Activated CD8-positive, alpha-beta T cell treated with anti-CD3 and anti-CD28 coated beads, Interleukin-2, amount 10 ng/mL, durations not matched to agents 7 days and 5 days (primary cell): ENCODE measurements at regions of chr19 and their contacts with region 1.

Region 1: GRCh38 chr19:17847538-17848366 is at the start of gene JAK3:
- DNase-seq: peak; percentile 90
- ATAC-seq: peak; percentile 80
- H3K4me3 Mint-ChIP-seq: peak within 1 kb of the TSS; percentile 91
- H3K27ac Mint-ChIP-seq: peak within 1 kb of the TSS; percentile 96
- H3K4me1 Mint-ChIP-seq: peaks cover 75% of the 10 kb centered on the region
- H3K27me3 Mint-ChIP-seq: no peaks in the 10 kb centered on the region
- total RNA-seq, gene JAK3: 125 to 127 TPM

Region 2: GRCh38 chr19:17511724-17512573 is 335.8 kb before region 1 on chr19:
- CTCF ChIA-PET with region 1: no interaction called
- POLR2A ChIA-PET with region 1: no interaction called
- DNase-seq: peak; percentile 94
- ATAC-seq: peak; percentile 74
- H3K4me3 Mint-ChIP-seq: peak overlapping the region; percentile 94
- H3K27ac Mint-ChIP-seq: peak overlapping the region; percentile 97
- H3K4me1 Mint-ChIP-seq: peaks cover 44% of the 10 kb centered on the region
- H3K27me3 Mint-ChIP-seq: no peaks in the 10 kb centered on the region

Region 3: DNA sequence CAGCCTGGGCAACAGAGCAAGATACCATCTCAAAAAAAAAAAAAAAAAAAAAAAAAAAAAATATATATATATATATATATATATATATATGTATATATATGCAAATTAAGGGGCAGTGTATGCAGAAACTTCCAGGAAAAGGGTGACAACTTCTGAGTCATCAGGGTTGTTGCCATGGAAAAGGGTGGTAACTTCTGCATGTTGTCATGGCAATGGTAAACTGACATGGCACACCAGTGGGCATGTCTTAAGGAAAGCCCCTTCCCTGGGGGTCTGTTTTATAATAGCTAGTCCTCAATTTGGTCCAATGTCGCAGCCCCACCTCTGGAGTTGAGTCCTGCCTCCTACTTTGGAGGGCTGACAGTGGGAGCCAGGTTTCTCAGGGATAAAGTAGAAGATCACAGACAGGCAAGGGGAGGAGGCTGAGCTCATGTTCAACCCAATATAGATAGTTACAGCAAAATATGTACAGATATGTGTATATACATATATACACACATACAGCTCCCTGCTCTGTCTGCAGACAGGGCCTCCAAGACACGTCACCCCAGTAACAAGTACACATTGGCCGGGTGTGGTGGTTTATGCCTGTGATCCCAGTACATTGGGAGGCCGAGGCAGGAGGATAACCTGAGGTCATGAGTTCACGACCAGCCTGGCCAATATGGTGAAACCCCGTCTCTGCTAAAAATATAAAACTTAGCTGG is 103.7 kb before region 1 on chr19:
- CTCF ChIA-PET with region 1: no interaction called
- POLR2A ChIA-PET with region 1: no interaction called
- DNase-seq: peak; percentile 26
- ATAC-seq: no peak
- H3K4me3 Mint-ChIP-seq: no peak overlapping the region
- H3K27ac Mint-ChIP-seq: no peak overlapping the region
- H3K4me1 Mint-ChIP-seq: peaks cover 27% of the 10 kb centered on the region
- H3K27me3 Mint-ChIP-seq: no peaks in the 10 kb centered on the region

Region 4: GRCh38 chr19:17834350-17835181 is 13.2 kb before region 1 on chr19:
- CTCF ChIA-PET with region 1: interaction called, 3 read pairs
- POLR2A ChIA-PET with region 1: interaction called, 12 read pairs
- DNase-seq: no peak
- ATAC-seq: no peak
- H3K4me3 Mint-ChIP-seq: no peak overlapping the region
- H3K27ac Mint-ChIP-seq: no peak overlapping the region
- H3K4me1 Mint-ChIP-seq: peaks cover 12% of the 10 kb centered on the region
- H3K27me3 Mint-ChIP-seq: no peaks in the 10 kb centered on the region

Region 5: DNA sequence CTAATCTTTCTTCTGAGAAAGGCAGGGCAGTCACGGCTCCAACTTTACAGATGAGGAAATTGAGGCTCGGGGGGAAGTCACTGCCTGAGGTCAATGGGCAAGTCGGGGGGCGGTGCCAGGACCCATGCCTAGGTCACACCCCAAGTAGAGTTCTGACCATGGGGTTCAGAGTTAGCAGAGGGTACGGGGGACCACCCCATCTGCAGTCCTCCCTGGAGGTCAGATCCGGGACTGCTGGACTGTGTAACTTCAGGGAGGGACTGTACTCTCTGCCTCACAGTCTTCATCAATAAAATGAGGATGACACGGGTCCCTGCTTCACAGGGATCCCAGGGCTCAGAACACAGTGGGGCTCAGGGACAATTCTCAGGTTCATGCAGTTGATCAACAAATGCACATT is 31.7 kb after region 1 on chr19:
- CTCF ChIA-PET with region 1: no interaction called
- POLR2A ChIA-PET with region 1: no interaction called
- DNase-seq: no peak
- ATAC-seq: no peak
- H3K4me3 Mint-ChIP-seq: no peak overlapping the region
- H3K27ac Mint-ChIP-seq: no peak overlapping the region
- H3K4me1 Mint-ChIP-seq: peaks cover 5% of the 10 kb centered on the region
- H3K27me3 Mint-ChIP-seq: no peaks in the 10 kb centered on the region

Region 6: GRCh38 chr19:18173572-18174288 is 326.0 kb after region 1 on chr19 and contains the start of gene IFI30:
- CTCF ChIA-PET with region 1: no interaction called
- POLR2A ChIA-PET with region 1: no interaction called
- DNase-seq: peak; percentile 72
- ATAC-seq: peak; percentile 83
- H3K4me3 Mint-ChIP-seq: peak within 1 kb of the TSS; percentile 89
- H3K27ac Mint-ChIP-seq: peak within 1 kb of the TSS; percentile 86
- H3K4me1 Mint-ChIP-seq: peaks cover 29% of the 10 kb centered on the region
- H3K27me3 Mint-ChIP-seq: no peaks in the 10 kb centered on the region
- total RNA-seq, gene IFI30: 67.4 to 72.3 TPM